ENCODE measurements at regions of chr2 and their contacts with region 1.

Region 1: GRCh38 chr2:223909001-223909741 is 36.0 kb downstream of the WDFY1 start:
- DNase-seq: peak; percentile 50
- ATAC-seq: peak; percentile 4
- H3K4me3 ChIP-seq: peak overlapping the region in 2 of 3 experiments; percentile 10 to 32; a peak in 3 of 6 replicates
- H3K27ac ChIP-seq: peak overlapping the region; percentile 66
- H3K4me1 ChIP-seq: peaks cover 40% of the 10 kb centered on the region
- H3K27me3 ChIP-seq: no peaks in the 10 kb centered on the region
- CTCF ChIP-seq: no peak
- EP300 ChIP-seq: no peak; a peak in 1 of 4 replicates
- POLR2A ChIP-seq: no peak
- RAD21 ChIP-seq: no peak

Region 2: GRCh38 chr2:223294756-223295155 is 614.4 kb before region 1 on chr2:
- CTCF ChIA-PET with region 1: no interaction called
- POLR2A ChIA-PET with region 1: no interaction called
- in situ Hi-C with region 1: no loop called
- intact Hi-C with region 1: no loop called
- DNase-seq: no peak
- ATAC-seq: no peak
- H3K4me3 ChIP-seq: no peak overlapping the region
- H3K27ac ChIP-seq: no peak overlapping the region
- H3K4me1 ChIP-seq: no peaks in the 10 kb centered on the region
- H3K27me3 ChIP-seq: no peaks in the 10 kb centered on the region; a peak in 1 of 5 replicates
- CTCF ChIP-seq: no peak
- EP300 ChIP-seq: no peak
- POLR2A ChIP-seq: no peak
- RAD21 ChIP-seq: no peak

Region 3: DNA sequence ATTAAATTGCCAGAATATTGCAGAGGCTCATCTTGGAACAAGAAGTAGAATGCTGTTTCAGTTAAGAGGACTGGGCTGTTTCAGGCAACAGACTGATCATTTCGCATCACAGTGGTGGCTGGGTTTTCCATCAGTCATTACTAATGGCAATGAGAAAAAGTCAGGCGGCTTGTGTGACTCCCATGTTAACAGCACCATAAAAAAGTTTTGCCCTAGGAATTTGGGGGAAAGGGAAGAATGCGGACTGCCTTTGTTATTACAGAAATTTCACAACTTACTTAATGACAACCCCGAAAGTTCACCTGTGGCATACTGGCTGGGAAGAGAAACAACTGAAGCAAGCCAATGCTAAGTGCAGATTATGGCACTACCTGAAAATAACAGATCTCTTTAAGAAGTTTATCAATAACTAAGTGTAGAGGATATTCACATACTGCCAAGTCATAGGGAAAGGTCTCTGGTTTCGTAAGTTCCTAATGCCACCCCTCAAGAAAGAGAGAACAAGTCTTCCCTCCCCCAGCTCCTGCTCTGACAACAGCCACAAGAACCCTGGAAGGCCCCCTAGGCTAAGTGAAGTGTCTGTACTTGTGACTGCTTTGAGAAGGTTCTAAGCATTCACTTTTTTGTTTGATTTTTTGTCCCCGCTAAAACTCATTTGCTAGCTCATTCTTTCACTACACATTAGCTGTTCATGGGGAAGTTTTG is 31.3 kb before region 1 on chr2:
- CTCF ChIA-PET with region 1: no interaction called
- POLR2A ChIA-PET with region 1: no interaction called
- in situ Hi-C with region 1: no loop called
- intact Hi-C with region 1: no loop called
- DNase-seq: no peak
- ATAC-seq: no peak
- H3K4me3 ChIP-seq: no peak overlapping the region
- H3K27ac ChIP-seq: no peak overlapping the region
- H3K4me1 ChIP-seq: peaks cover 7% of the 10 kb centered on the region; the same call in 1 of the 2 replicates
- H3K27me3 ChIP-seq: no peaks in the 10 kb centered on the region
- CTCF ChIP-seq: no peak
- EP300 ChIP-seq: no peak
- POLR2A ChIP-seq: no peak
- RAD21 ChIP-seq: no peak

Region 4: DNA sequence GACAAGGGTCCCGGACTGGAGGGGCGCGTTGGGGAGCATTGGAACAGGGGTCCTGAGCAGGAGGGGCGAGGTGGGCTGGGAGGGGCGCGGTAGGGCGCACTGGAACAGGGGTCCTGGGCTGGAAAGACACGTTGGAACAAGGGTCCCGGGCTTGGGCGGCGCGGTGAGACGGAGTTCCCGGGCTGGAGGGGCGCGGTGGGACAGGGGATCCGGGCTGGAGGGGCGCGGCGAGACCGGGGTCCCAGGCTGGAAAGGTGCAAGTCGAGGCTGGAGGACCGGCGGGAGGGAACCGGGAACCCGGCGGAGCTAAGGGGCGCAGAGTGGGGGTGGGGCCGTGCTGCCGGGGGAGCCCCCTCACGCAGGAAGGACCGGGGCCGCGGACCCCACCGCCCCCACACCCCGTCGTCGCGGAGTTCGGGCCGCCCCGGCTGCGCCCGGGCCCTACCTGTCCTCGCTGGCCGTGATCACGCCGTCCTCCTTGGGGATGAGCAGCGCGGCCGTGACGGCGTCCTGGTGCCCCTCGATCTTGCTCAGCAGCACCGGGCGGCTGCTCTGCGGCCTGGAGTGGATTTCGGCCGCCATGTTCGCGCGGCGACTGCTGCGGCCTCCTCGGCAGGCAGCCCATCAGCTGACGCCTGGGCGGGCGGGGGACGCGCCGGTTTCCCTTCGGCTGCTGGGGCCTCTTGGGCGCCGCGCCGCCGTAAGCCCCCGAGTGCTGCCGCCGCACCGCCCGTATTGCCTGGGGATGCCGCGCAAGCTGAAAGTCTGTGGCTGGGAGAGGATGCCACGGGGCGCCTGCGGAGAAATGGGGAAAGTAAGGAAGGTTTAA is 35.7 kb after region 1 on chr2 and contains the start of gene WDFY1:
- CTCF ChIA-PET with region 1: no interaction called
- POLR2A ChIA-PET with region 1: interaction called, 9 read pairs
- in situ Hi-C with region 1: no loop called
- intact Hi-C with region 1: loop called (anchors 2 kb)
- DNase-seq: peak; percentile 75
- ATAC-seq: peak; percentile 95
- H3K4me3 ChIP-seq: peak within 1 kb of the TSS; percentile 80 to 100 (median 99)
- H3K27ac ChIP-seq: peak within 1 kb of the TSS; percentile 85
- H3K4me1 ChIP-seq: peaks cover 37% of the 10 kb centered on the region
- H3K27me3 ChIP-seq: no peaks in the 10 kb centered on the region; a peak in 1 of 5 replicates
- CTCF ChIP-seq: peak; percentile 24; the same call in 1 of the 2 replicates
- EP300 ChIP-seq: peak; percentile 69 to 77; a peak in 3 of 4 replicates
- POLR2A ChIP-seq: peak; percentile 90 to 95
- RAD21 ChIP-seq: peak; percentile 80
- total RNA-seq, gene WDFY1: 77.0 and 92.1 TPM in 2 replicates

Region 5: DNA sequence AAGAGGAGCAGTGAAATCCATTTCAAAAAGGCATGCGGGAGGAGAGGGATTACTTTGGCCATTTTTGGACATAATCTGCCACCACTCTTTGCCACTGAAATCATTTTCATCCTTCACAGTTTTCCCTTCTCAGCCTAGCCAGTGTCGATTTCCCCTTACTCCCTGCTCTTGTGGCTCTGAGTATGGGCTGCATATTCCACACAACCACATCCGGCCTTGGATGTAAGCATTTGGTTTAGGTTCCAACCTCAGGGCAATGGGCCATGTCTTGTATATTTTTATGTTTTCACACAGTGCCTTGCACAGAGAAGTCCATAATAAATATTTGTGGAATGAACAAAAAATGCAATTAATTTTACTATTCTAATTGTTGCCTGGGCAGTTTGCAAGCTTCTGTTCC is 137.6 kb after region 1 on chr2:
- CTCF ChIA-PET with region 1: no interaction called
- POLR2A ChIA-PET with region 1: no interaction called
- in situ Hi-C with region 1: no loop called
- intact Hi-C with region 1: no loop called
- DNase-seq: no peak
- ATAC-seq: no peak
- H3K4me3 ChIP-seq: no peak overlapping the region
- H3K27ac ChIP-seq: no peak overlapping the region
- H3K4me1 ChIP-seq: 0 out of 2 replicates have a peak, but pooled peaks cover 6% of the 10 kb centered on the region
- H3K27me3 ChIP-seq: peaks cover 0 to 39% of the 10 kb centered on the region in 2 experiments; a peak in 4 of 5 replicates
- CTCF ChIP-seq: no peak
- EP300 ChIP-seq: no peak
- POLR2A ChIP-seq: no peak
- RAD21 ChIP-seq: no peak

Measured in HepG2 (cell line).